Gastrocnemius medialis (tissue), 4 donors: ENCODE measurements at regions of chr2 and their contacts with region 1.

Region 1: GRCh38 chr2:226387499-226387942 is 412.1 kb downstream of the IRS1 start:
- DNase-seq: no peak
- ATAC-seq: no peak
- H3K4me3 ChIP-seq: no peak overlapping the region
- H3K27ac ChIP-seq: no peak overlapping the region
- H3K4me1 ChIP-seq: no peaks in the 10 kb centered on the region
- H3K27me3 ChIP-seq: no peaks in the 10 kb centered on the region
- CTCF ChIP-seq: no peak
- POLR2A ChIP-seq: no peak

Region 2: GRCh38 chr2:226079671-226080181 is 307.8 kb before region 1 on chr2:
- in situ Hi-C with region 1: no loop called
- intact Hi-C with region 1: no loop called
- DNase-seq: no peak
- ATAC-seq: no peak
- H3K4me3 ChIP-seq: no peak overlapping the region
- H3K27ac ChIP-seq: no peak overlapping the region
- H3K4me1 ChIP-seq: peaks cover 0 to 12% of the 10 kb centered on the region in 2 donors
- H3K27me3 ChIP-seq: no peaks in the 10 kb centered on the region
- CTCF ChIP-seq: no peak
- POLR2A ChIP-seq: no peak

Region 3: DNA sequence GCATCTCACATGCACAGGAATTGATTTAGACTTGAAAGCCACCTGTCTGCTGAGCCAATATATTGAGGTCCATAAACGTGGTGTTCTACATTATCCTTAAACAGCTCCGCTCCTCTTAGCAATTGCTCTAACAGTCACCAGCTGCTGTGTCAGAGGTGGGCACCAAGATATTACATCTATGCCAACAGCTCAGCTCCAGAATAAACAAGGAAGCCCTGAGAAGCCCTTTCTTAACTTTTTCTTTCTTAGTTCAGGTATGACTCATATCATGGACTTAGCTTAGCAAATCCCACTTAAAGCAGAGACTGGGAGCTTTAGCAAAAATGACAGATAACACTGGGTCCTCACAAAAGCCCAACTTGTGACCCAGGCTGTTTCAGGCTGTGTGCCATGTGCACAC is 24.5 kb before region 1 on chr2:
- in situ Hi-C with region 1: no loop called
- intact Hi-C with region 1: loop called (anchors 1 kb)
- DNase-seq: no peak
- ATAC-seq: no peak
- H3K4me3 ChIP-seq: no peak overlapping the region
- H3K27ac ChIP-seq: no peak overlapping the region
- H3K4me1 ChIP-seq: peaks cover 11 to 13% of the 10 kb centered on the region in 2 donors
- H3K27me3 ChIP-seq: no peaks in the 10 kb centered on the region
- CTCF ChIP-seq: no peak
- POLR2A ChIP-seq: no peak